Endothelial cell of umbilical vein (primary cell): ENCODE measurements at regions of chr1 and their contacts with region 1.

Region 1: GRCh38 chr1:82317671-82318070 is 516.9 kb downstream of the ADGRL2 start:
- DNase-seq: peak; percentile 38
- H3K4me3 ChIP-seq: no peak overlapping the region
- H3K27ac ChIP-seq: no peak overlapping the region
- H3K4me1 ChIP-seq: peaks cover 9% of the 10 kb centered on the region
- H3K27me3 ChIP-seq: no peaks in the 10 kb centered on the region
- CTCF ChIP-seq: no peak
- POLR2A ChIP-seq: no peak

Region 2: GRCh38 chr1:82449658-82450057 is 132.0 kb after region 1 on chr1:
- CTCF ChIA-PET with region 1: no interaction called
- POLR2A ChIA-PET with region 1: no interaction called
- dilution Hi-C with region 1: no loop called
- intact Hi-C with region 1: no loop called
- DNase-seq: no peak
- H3K4me3 ChIP-seq: no peak overlapping the region
- H3K27ac ChIP-seq: no peak overlapping the region
- H3K4me1 ChIP-seq: no peaks in the 10 kb centered on the region
- H3K27me3 ChIP-seq: no peaks in the 10 kb centered on the region
- CTCF ChIP-seq: no peak
- POLR2A ChIP-seq: no peak

Region 3: GRCh38 chr1:82565146-82565545 is 247.5 kb after region 1 on chr1:
- CTCF ChIA-PET with region 1: no interaction called
- POLR2A ChIA-PET with region 1: no interaction called
- dilution Hi-C with region 1: no loop called
- intact Hi-C with region 1: loop called (anchors 10 kb)
- DNase-seq: no peak
- H3K4me3 ChIP-seq: no peak overlapping the region
- H3K27ac ChIP-seq: peak overlapping the region; percentile 22
- H3K4me1 ChIP-seq: peaks cover 11% of the 10 kb centered on the region
- H3K27me3 ChIP-seq: no peaks in the 10 kb centered on the region
- CTCF ChIP-seq: peak in 1 of 2 donors; percentile 6
- POLR2A ChIP-seq: no peak